RWPE1 (cell line): ENCODE measurements at regions of chr20 and their contacts with region 1.

Region 1: DNA sequence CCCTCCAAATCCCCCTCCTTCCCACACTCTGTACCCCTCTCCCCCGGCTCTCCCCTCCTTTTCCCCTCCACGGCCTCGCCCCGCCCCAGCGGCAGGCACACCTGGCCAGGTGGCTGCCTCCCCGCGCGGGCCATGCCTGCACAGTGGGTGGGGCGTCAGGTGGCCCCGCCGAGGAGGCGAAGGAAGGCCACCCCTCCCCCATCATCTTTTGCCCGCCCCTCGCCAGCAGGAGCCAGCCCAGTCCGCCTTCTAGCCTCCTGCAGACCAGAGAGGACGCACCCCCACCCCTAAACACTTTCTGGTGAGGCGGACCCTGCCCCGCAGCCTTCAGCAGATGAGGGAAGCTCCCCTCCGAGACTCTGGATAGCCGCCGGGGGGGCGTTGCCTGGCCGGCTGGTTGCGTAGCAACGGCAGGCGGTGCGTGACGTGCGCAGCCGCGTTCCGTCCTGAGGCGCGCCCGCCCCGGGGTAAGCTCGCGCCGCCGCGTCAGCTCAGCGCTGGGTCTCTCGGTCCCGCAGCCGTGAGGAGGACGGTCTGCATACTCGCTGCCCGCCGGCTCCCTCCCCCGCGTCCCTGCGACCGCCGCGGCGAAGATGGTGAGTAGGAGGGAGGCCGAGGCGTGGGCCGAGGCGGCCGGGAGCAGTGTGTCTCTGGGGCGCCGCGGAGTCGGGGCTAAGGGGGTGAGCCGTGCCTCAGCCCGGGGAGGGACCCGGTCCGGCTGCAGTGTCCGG is at the start of gene DSTN:
- DNase-seq: peak; percentile 97
- H3K27ac ChIP-seq: peak within 1 kb of the TSS; percentile 99
- CTCF ChIP-seq: no peak

Region 2: DNA sequence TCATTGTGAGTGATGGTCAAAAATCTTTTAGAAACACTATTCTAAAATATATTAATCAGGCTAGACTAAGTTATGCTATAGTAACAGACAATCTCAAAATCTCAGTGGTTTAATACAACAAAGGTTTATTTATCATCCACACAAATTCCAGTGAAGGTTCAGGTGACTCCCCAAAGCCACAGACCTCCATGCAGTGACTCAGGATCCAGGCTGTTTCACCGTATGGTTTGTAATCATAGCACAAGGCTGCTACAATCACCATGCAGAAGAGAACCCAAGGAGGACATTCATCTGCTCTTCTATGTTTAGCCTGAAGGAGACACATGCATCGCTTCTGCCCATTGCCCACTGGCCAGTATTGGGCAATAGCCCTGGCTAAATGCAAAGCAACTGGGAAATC is 84.8 kb before region 1 on chr20:
- CTCF ChIA-PET with region 1: no interaction called
- POLR2A ChIA-PET with region 1: no interaction called
- DNase-seq: no peak
- H3K27ac ChIP-seq: no peak overlapping the region
- CTCF ChIP-seq: no peak

Region 3: DNA sequence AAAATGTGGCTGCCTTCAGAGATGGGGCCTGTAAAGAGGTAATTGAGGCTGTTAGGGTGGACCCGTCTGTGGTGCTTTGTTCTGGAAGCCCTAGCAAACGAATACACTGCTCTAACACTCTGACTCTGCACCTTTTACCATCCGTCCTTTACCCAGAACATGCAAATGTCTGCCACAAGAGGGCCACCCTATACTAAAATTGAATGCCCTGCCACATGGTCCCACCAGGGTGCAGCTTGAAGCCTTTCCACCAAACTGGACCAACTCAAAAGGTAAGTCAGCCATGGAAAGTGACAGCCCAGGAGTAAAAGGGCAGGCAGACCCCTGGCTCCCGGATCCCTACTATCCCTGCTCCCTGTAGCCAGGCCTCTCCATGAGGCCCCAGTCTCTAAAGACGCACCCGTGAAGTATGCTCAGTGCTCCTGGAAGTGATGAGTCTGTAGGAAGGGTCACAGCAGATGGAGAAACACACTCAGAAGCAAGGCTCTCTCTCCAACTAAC is 32.8 kb before region 1 on chr20:
- CTCF ChIA-PET with region 1: interaction called, 12 read pairs
- POLR2A ChIA-PET with region 1: interaction called, 8 read pairs
- DNase-seq: peak; percentile 94
- H3K27ac ChIP-seq: no peak overlapping the region
- CTCF ChIP-seq: peak; percentile 88